ENCODE measurements at regions of chr15 and their contacts with region 1.

Region 1: GRCh38 chr15:41180206-41180789 is 50.3 kb downstream of the EXD1 start:
- DNase-seq: no peak

Region 2: DNA sequence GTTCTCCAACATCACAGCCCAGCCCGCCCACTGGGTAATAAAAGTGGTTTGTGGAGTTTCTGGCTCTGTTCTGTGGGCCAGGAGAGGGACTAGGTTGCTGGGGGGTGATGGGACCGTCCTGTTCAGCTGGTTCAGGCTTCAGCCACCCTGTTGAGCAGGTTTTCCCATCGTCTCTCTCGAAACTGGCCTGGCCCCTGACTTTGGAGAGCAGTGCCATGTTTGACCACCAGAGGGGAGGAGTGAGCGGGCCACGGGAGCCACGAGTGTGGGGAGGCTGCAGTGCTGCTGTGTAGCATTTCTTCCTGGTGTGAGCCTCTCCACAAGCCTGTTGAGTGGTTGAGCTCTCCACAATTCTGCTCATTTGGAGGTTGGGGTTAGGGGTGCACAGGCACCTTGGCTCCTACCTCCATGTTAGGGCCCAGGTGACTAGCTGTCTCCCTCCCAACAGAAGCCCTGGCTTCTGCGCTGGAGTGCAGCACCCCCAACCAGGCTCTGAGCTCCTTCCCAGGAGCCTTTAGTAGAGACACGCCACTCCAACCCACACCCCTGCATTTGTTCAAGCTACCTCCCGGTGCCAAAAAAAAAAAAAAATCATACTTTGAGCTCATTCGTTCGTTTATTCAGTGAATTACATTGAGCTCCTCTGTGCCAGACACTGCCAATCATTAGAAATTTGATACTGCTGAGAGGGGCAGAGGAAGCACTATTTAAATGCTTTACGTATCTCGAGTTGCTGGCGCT is 322.5 kb before region 1 on chr15:
- intact Hi-C with region 1: loop called in 1 of 2 experiments (anchors 5 kb)
- DNase-seq: peak; percentile 93

Region 3: GRCh38 chr15:40906091-40906990 is 274.0 kb before region 1 on chr15:
- intact Hi-C with region 1: loop called (anchors 10 kb)
- DNase-seq: peak; percentile 96

Region 4: GRCh38 chr15:41148065-41148464 is 32.2 kb before region 1 on chr15:
- intact Hi-C with region 1: no loop called
- DNase-seq: no peak

Region 5: DNA sequence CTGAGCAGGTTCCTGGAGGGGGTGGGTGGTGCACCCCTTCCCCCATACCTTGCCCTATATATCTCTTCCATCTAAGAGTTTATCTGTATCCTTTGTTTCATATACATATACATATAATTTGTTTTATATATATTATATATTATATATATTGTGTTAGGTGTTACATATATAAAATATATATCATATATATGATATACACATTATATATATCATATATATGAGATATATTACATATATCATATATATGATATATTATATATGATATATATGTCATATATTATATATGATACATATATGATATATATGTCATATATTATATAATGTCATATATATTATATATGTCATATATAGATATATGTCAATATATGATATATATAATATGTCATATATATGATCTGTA is 19.2 kb after region 1 on chr15:
- intact Hi-C with region 1: loop called in 1 of 2 experiments (anchors 1 kb)
- DNase-seq: no peak

Measured in posterior vena cava (tissue), 2 donors.